ENCODE measurements at regions of chr19 and their contacts with region 1.

Region 1: DNA sequence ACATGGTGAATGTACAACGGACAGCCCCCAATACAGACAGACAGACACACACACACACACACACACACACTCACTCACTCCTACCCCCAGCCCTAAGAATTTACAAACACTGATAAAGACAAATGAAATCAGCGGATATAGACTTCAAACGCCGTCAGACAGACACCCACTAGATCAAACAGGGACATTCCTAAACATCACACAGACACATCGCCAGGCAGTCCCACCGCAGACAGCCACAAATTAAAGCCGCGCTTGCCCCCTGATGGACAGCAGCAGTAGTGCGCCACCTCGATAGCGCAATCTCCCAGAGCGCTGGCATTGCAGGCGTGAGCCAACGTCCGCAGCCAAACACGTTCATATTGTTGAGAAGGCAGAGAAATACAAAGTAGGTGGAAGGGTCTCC is 24.7 kb upstream of the ADGRE1 start:
- H3K4me3 ChIP-seq: peak overlapping the region; percentile 20; the same call in 1 of the 2 replicates
- H3K27ac ChIP-seq: no peak overlapping the region
- H3K4me1 ChIP-seq: no peaks in the 10 kb centered on the region
- CTCF ChIP-seq: peak; percentile 93

Region 2: GRCh38 chr19:6632002-6632621 is 230.6 kb before region 1 on chr19:
- CTCF ChIA-PET with region 1: interaction called, 10 read pairs
- POLR2A ChIA-PET with region 1: no interaction called
- H3K4me3 ChIP-seq: no peak overlapping the region
- H3K27ac ChIP-seq: no peak overlapping the region
- H3K4me1 ChIP-seq: no peaks in the 10 kb centered on the region
- CTCF ChIP-seq: peak; percentile 27; the same call in 1 of the 2 replicates

Region 3: DNA sequence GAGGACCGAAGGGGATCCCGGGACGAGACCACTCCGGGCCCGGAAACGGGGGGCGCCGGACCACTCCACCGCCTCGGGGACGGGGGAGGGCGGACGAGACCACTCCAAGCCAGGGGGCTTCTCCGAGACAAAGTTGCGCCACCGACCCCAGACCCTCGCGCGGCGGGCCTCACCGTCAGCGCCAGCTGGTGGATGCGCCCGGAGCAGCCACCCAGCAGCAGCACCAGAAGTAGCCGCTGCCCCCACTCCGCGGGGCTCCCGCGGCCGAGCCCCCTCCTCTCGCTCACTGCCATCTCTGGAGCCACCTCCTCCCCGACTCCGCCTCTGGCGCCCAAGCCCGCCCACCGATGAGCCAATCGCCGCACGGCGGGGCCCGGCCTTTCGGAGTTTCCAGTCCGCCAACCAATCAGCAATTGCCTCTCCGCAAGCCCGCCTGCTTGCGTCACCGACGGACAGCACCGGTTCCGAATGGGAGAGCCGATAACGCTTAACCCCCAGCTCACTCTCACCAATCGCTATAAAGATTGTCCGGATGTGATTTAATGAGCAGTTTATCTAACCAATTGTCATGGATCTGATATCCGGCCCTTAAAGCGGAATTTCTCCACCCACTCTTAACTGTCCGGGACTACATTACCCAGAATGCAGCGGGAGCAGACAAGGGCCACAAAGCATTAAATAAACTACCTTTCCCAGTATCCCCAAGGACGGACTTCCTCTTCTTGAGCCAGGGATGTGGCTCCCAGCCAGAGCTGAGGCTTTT is 125.2 kb before region 1 on chr19 and contains the start of gene GPR108:
- CTCF ChIA-PET with region 1: interaction called, 49 read pairs
- POLR2A ChIA-PET with region 1: interaction called, 6 read pairs
- H3K4me3 ChIP-seq: peak within 1 kb of the TSS; percentile 64
- H3K27ac ChIP-seq: peak within 1 kb of the TSS; percentile 78
- H3K4me1 ChIP-seq: peaks cover 11% of the 10 kb centered on the region
- CTCF ChIP-seq: 0 out of 2 replicates have a peak, but pooled peaks have one; percentile 6

Region 4: GRCh38 chr19:6995079-6995478 is 132.4 kb after region 1 on chr19:
- CTCF ChIA-PET with region 1: no interaction called
- POLR2A ChIA-PET with region 1: no interaction called
- H3K4me3 ChIP-seq: no peak overlapping the region
- H3K27ac ChIP-seq: no peak overlapping the region
- H3K4me1 ChIP-seq: no peaks in the 10 kb centered on the region
- CTCF ChIP-seq: no peak

Region 5: DNA sequence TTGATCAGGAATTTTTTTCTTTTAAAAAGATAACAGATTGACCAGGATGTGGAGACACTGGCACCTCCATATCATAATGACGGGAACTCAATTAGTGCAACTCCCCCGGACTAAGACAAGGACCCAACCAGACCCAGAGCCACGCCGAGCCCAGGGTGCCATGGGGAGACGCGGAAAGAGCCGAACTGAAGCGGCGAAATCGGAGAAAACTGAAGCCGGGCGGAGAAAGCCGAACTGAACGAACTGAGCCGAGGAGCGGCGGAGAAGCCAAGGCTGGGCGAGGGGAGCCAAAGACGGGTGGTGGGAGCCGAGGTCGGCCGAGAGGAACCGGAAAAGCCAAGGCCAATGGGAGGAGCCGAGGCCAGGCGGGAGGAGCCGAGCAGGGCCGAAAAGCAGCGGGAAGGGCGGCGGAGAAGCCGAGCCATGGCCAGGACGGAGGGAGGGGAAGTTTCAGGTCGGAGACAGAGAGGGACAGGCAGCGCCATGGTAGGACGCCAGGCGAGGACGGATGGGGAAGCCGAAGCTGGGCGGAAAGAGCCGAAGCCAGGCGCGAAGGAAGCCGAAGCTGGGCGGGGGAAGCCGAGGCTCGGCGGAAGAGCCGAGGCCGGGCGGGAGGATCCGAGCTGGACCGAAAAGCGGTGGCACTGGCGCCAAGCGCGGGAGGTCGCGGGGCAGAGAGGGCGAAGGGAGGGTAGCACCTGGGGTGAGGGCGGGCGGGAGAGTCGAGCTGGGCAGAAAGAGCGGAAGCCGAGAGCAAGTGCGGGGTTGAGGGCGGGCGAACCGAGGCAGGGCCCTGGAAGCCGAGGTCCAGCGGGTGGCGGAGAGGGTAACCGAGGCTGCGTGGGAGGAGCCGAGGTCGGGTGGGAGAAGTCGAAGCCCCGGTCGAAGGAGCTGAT is 236.3 kb after region 1 on chr19:
- CTCF ChIA-PET with region 1: no interaction called
- POLR2A ChIA-PET with region 1: no interaction called
- H3K4me3 ChIP-seq: peak overlapping the region; percentile 51
- H3K27ac ChIP-seq: peak overlapping the region; percentile 89
- H3K4me1 ChIP-seq: no peaks in the 10 kb centered on the region
- CTCF ChIP-seq: no peak

Measured in HEK293 (cell line).